Right cardiac atrium (tissue), 5 donors: ENCODE measurements at regions of chr4 and their contacts with region 1.

Region 1: GRCh38 chr4:168995537-168996295 is 14.3 kb downstream of the CBR4 start:
- DNase-seq: no peak
- ATAC-seq: peak; percentile 43 to 60
- H3K4me3 ChIP-seq: no peak overlapping the region
- H3K27ac ChIP-seq: no peak overlapping the region
- H3K4me1 ChIP-seq: no peaks in the 10 kb centered on the region
- H3K27me3 ChIP-seq: no peaks in the 10 kb centered on the region

Region 2: DNA sequence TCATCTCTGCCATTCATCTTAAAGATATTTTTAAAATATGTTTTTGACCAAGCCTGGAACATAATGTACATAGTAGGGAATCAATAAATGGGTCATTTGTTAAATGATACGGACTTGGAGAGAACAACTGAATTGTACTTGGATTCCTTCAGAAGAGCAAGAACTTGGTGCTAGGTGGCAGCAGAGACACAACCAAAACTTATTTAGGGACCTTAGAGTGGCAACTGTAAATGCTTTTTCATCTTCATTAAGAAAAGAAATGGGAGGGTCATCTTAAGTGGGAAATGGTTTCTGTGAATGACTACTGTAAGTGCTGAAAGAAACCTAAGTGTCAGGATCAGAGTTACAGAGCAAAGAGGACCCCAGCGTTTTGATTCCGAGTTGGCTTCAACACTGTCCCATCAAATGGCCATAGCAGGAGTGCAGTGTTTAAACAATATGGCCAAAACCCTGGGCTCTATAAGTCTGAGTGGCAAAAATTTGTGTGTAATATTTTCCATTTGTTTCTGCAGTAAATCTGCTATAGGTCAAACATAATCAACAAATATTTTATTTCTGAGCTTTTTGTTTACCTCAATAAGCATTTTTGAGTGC is 285.3 kb before region 1 on chr4:
- intact Hi-C with region 1: loop called in 1 of 4 experiments (anchors 5 kb)
- DNase-seq: peak in 2 of 3 donors; percentile 30 to 69
- ATAC-seq: peak; percentile 64 to 69
- H3K4me3 ChIP-seq: no peak overlapping the region
- H3K27ac ChIP-seq: no peak overlapping the region
- H3K4me1 ChIP-seq: no peaks in the 10 kb centered on the region
- H3K27me3 ChIP-seq: no peaks in the 10 kb centered on the region

Region 3: GRCh38 chr4:169215656-169216055 is 219.9 kb after region 1 on chr4:
- intact Hi-C with region 1: no loop called
- DNase-seq: no peak
- ATAC-seq: no peak
- H3K4me3 ChIP-seq: no peak overlapping the region
- H3K27ac ChIP-seq: no peak overlapping the region
- H3K4me1 ChIP-seq: no peaks in the 10 kb centered on the region
- H3K27me3 ChIP-seq: no peaks in the 10 kb centered on the region

Region 4: GRCh38 chr4:169362607-169363006 is 366.9 kb after region 1 on chr4:
- intact Hi-C with region 1: no loop called
- DNase-seq: no peak
- ATAC-seq: no peak
- H3K4me3 ChIP-seq: no peak overlapping the region
- H3K27ac ChIP-seq: no peak overlapping the region
- H3K4me1 ChIP-seq: no peaks in the 10 kb centered on the region
- H3K27me3 ChIP-seq: no peaks in the 10 kb centered on the region

Region 5: GRCh38 chr4:169485791-169486742 is 490.4 kb after region 1 on chr4:
- intact Hi-C with region 1: loop called in 1 of 4 experiments (anchors 10 kb)
- DNase-seq: no peak
- ATAC-seq: peak in 1 of 2 donors; percentile 52
- H3K4me3 ChIP-seq: no peak overlapping the region
- H3K27ac ChIP-seq: no peak overlapping the region
- H3K4me1 ChIP-seq: no peaks in the 10 kb centered on the region
- H3K27me3 ChIP-seq: no peaks in the 10 kb centered on the region